Activated T-helper 2 cell treated with anti-CD3 and anti-CD28 coated beads, Interferon-gamma antibody, Interleukin-2, Interleukin-4, amounts not matched to agents 10 μg/mL and 5 μg/mL and 100 μg/mL, durations not matched to agents 14 hours and 24 hours and 36 hours (primary cell): ENCODE measurements at regions of chr14 and their contacts with region 1.

Region 1: DNA sequence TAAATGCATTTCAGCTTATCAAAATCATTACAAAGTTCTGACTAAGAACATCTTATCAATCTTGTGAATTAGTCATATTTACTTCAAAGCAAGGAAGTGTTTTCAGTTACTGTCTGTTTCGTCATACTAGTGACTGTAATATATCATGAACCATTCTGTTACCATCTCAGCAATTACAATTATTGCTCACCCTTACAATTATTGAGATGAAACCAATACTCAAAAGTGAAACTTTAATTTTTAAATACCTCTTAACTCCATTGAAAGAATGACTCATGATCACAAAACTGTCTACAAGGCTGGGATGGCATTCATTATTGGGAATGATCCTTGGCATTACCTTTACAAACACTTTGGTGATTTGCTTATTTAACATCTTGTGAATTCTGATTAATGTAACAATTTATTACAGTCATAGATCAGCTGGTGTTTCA is 90.3 kb downstream of the RPS6KA5 start:
- DNase-seq: no peak
- H3K4me3 Mint-ChIP-seq: peak overlapping the region; percentile 66
- H3K27ac Mint-ChIP-seq: peak overlapping the region; percentile 93
- H3K4me1 Mint-ChIP-seq: peaks cover 45% of the 10 kb centered on the region
- H3K27me3 Mint-ChIP-seq: no peaks in the 10 kb centered on the region

Region 2: DNA sequence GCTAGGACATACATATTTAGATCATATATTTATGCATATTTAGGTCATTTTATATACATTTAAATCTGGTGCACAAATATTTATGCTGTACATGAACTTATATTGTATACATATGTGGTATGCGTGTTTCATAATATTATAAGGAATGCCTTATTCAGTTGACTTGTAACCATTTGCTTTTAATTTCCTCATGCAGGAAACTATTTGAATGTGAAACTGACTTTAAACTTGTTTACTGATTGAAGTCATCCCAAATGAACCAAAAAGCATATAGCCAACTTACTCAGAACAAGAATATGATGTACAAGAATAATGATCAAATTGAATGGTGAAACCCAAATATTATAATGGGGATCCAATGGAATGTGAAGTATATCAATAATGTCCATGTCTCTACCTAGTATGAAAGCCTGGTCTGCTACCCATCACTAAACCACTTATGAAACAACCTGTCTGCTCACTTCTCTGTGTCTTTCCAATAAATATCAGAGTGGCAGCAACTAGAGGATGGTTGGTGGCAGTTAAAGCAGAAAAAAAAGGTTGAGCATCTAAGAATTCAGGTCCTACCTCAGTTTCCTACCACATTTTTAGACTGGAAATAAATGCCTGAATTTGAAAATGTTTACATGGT is 51.9 kb after region 1 on chr14:
- intact Hi-C with region 1: loop called (anchors 1 kb)
- DNase-seq: no peak
- H3K4me3 Mint-ChIP-seq: peak overlapping the region; percentile 66
- H3K27ac Mint-ChIP-seq: peak overlapping the region; percentile 90
- H3K4me1 Mint-ChIP-seq: peaks cover 57% of the 10 kb centered on the region
- H3K27me3 Mint-ChIP-seq: no peaks in the 10 kb centered on the region

Region 3: GRCh38 chr14:91100102-91100501 is 129.9 kb after region 1 on chr14:
- intact Hi-C with region 1: loop called (anchors 1 kb)
- DNase-seq: no peak
- H3K4me3 Mint-ChIP-seq: no peak overlapping the region
- H3K27ac Mint-ChIP-seq: peak overlapping the region; percentile 75
- H3K4me1 Mint-ChIP-seq: peaks cover 36% of the 10 kb centered on the region
- H3K27me3 Mint-ChIP-seq: no peaks in the 10 kb centered on the region

Region 4: GRCh38 chr14:91114079-91115065 is 144.2 kb after region 1 on chr14:
- intact Hi-C with region 1: loop called (anchors 2 kb)
- DNase-seq: peak; percentile 77
- H3K4me3 Mint-ChIP-seq: peak overlapping the region; percentile 95
- H3K27ac Mint-ChIP-seq: peak overlapping the region; percentile 92
- H3K4me1 Mint-ChIP-seq: peaks cover 59% of the 10 kb centered on the region
- H3K27me3 Mint-ChIP-seq: no peaks in the 10 kb centered on the region